RWPE1 (cell line): ENCODE measurements at regions of chr3 and their contacts with region 1.

Region 1: GRCh38 chr3:187101184-187102072 is 37.9 kb downstream of the RPL39L start:
- DNase-seq: peak; percentile 20
- H3K27ac ChIP-seq: no peak overlapping the region
- CTCF ChIP-seq: no peak

Region 2: GRCh38 chr3:186589121-186589520 is 512.3 kb before region 1 on chr3:
- CTCF ChIA-PET with region 1: no interaction called
- POLR2A ChIA-PET with region 1: no interaction called
- DNase-seq: no peak
- H3K27ac ChIP-seq: no peak overlapping the region; the same call in 1 of the 2 replicates
- CTCF ChIP-seq: no peak

Region 3: GRCh38 chr3:187112934-187113793 is 11.7 kb after region 1 on chr3:
- CTCF ChIA-PET with region 1: interaction called, 14 read pairs
- POLR2A ChIA-PET with region 1: no interaction called
- DNase-seq: peak; percentile 20
- H3K27ac ChIP-seq: no peak overlapping the region
- CTCF ChIP-seq: peak; percentile 69